ENCODE measurements at regions of chr6 and their contacts with region 1.

Region 1: GRCh38 chr6:132483779-132484679 is 28.9 kb downstream of the STX7 start:
- DNase-seq: peak; percentile 80
- H3K4me3 ChIP-seq: no peak overlapping the region
- H3K27ac ChIP-seq: no peak overlapping the region
- H3K4me1 ChIP-seq: peaks cover 42% of the 10 kb centered on the region
- H3K27me3 ChIP-seq: no peaks in the 10 kb centered on the region

Region 2: DNA sequence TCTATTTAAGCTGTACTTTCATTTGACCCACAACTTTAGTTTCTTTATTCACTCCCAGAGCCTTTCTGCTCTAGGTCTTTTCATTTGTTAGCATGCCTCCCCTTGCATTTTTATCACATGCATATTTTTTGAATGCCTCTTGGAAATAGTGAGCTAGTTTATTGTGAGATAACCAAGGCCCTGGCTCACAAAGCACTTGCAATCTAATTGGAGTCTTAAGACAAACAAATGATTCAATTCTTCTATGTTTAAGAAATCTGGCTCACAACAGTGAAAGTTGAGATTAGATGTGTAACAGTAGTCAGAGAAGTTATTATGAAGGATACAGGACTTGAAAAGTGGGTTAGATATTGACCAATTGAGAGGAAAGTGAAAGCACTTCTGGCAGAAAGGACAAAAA is 256.1 kb before region 1 on chr6:
- in situ Hi-C with region 1: no loop called
- DNase-seq: peak; percentile 69
- H3K4me3 ChIP-seq: no peak overlapping the region
- H3K27ac ChIP-seq: peak overlapping the region; percentile 12
- H3K4me1 ChIP-seq: peaks cover 13% of the 10 kb centered on the region
- H3K27me3 ChIP-seq: no peaks in the 10 kb centered on the region

Region 3: GRCh38 chr6:132300323-132300949 is 183.6 kb before region 1 on chr6:
- in situ Hi-C with region 1: loop called (anchors 10 kb)
- DNase-seq: peak; percentile 81
- H3K4me3 ChIP-seq: no peak overlapping the region
- H3K27ac ChIP-seq: no peak overlapping the region
- H3K4me1 ChIP-seq: no peaks in the 10 kb centered on the region
- H3K27me3 ChIP-seq: no peaks in the 10 kb centered on the region